ENCODE measurements at regions of chr1 and their contacts with region 1.

Region 1: DNA sequence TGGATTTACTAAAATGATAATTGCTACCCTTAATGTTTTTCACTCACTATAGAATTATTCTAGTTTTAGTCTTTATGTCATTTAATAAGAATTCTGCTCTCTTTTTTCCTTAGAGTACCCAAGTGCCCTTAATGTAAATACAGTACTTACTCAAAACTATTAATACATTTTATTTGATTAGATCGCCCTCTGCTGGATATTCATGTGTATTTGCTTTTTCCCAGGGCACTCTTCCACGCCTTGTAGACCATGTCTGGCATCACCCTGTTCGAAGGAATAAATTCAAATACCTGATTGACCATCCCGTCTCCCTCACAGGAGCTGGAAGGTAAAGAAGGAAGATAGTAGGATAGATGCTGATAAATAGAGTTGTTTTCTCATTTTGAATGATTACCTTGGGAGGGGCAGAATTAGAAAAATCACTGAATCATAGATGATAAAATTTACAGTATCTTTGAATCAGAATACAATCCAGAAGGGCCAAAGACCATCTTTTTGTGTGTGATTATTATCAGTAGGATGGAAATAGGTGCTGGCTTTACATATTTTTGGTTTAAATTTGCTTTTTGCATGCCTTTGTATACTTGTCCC is 4.1 kb downstream of the AXDND1 start:
- DNase-seq: peak; percentile 36
- H3K4me3 Mint-ChIP-seq: no peak overlapping the region
- H3K27ac Mint-ChIP-seq: no peak overlapping the region
- H3K4me1 Mint-ChIP-seq: peaks cover 26% of the 10 kb centered on the region
- H3K27me3 Mint-ChIP-seq: peaks cover 4% of the 10 kb centered on the region

Region 2: DNA sequence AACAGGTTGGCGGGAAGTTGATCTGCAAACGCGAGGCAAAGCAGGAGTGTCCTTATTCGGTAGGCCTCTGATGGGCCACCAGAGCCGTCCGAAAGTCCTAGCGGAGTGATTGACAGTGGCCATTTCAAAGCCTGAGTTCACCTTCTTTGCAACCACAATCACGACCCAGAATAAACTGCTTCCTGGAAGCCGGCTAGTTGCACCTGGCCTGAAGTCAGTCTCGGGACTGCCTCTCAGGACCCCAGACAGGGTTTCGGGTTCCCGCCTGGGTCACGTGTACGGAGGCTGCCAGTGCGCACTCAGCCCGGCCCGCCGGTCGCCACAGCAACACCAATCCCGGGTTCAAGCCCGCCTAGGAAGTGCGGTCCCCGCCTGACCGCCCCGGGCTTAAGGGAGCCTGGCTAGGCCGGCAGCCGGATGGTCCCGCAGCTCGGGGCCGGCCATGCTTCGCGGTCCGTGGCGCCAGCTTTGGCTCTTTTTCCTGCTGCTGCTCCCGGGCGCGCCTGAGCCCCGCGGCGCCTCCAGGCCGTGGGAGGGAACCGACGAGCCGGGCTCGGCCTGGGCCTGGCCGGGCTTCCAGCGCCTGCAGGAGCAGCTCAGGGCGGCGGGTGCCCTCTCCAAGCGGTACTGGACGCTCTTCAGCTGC is 288.0 kb before region 1 on chr1 and contains the start of gene TOR3A:
- CTCF ChIA-PET with region 1: interaction called, 23 read pairs
- DNase-seq: peak; percentile 90
- H3K4me3 Mint-ChIP-seq: peak within 1 kb of the TSS; percentile 91
- H3K27ac Mint-ChIP-seq: peak within 1 kb of the TSS; percentile 91
- H3K4me1 Mint-ChIP-seq: peaks cover 36% of the 10 kb centered on the region
- H3K27me3 Mint-ChIP-seq: no peaks in the 10 kb centered on the region

Region 3: GRCh38 chr1:179121159-179121938 is 248.5 kb before region 1 on chr1:
- CTCF ChIA-PET with region 1: interaction called, 30 read pairs
- DNase-seq: peak; percentile 60
- H3K4me3 Mint-ChIP-seq: no peak overlapping the region
- H3K27ac Mint-ChIP-seq: no peak overlapping the region
- H3K4me1 Mint-ChIP-seq: peaks cover 3% of the 10 kb centered on the region
- H3K27me3 Mint-ChIP-seq: no peaks in the 10 kb centered on the region

Region 4: DNA sequence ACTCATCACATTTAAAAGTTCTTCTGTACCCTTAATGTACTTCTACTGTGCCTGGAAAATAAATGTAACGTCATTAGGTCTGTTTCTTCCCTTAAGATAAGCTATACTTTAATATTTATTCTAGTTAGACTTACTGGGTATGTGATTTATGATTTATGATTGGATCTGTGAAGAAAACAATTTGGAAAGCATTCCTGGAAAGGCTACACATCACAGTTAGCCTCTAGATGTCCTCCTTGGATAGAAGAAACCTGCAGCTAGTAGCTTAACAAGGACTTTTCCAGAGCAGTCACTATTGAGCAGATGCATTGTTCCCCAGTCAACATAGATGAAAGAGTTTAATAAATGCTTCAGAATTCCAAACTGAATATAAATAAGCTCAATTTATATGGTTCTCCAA is 118.2 kb before region 1 on chr1:
- CTCF ChIA-PET with region 1: interaction called, 11 read pairs
- DNase-seq: no peak
- H3K4me3 Mint-ChIP-seq: no peak overlapping the region
- H3K27ac Mint-ChIP-seq: no peak overlapping the region
- H3K4me1 Mint-ChIP-seq: no peaks in the 10 kb centered on the region
- H3K27me3 Mint-ChIP-seq: no peaks in the 10 kb centered on the region

Region 5: GRCh38 chr1:179353546-179353945 is 16.3 kb before region 1 on chr1:
- CTCF ChIA-PET with region 1: no interaction called
- DNase-seq: no peak
- H3K4me3 Mint-ChIP-seq: no peak overlapping the region
- H3K27ac Mint-ChIP-seq: no peak overlapping the region
- H3K4me1 Mint-ChIP-seq: no peaks in the 10 kb centered on the region
- H3K27me3 Mint-ChIP-seq: no peaks in the 10 kb centered on the region

Region 6: GRCh38 chr1:179541774-179542173 is 171.9 kb after region 1 on chr1:
- CTCF ChIA-PET with region 1: no interaction called
- DNase-seq: no peak
- H3K4me3 Mint-ChIP-seq: no peak overlapping the region
- H3K27ac Mint-ChIP-seq: no peak overlapping the region
- H3K4me1 Mint-ChIP-seq: no peaks in the 10 kb centered on the region
- H3K27me3 Mint-ChIP-seq: peaks cover 3% of the 10 kb centered on the region

Measured in activated naive CD4-positive, alpha-beta T cell treated with anti-CD3 and anti-CD28 coated beads, Interleukin-2, amount 10 ng/mL, durations not matched to agents 7 days and 5 days (primary cell).